ENCODE measurements at regions of chr17 and their contacts with region 1.

Region 1: GRCh38 chr17:57021226-57021940 is 43.5 kb downstream of the SCPEP1 start:
- DNase-seq: no peak
- H3K4me3 ChIP-seq: no peak overlapping the region
- H3K27me3 ChIP-seq: no peaks in the 10 kb centered on the region
- CTCF ChIP-seq: no peak

Region 2: DNA sequence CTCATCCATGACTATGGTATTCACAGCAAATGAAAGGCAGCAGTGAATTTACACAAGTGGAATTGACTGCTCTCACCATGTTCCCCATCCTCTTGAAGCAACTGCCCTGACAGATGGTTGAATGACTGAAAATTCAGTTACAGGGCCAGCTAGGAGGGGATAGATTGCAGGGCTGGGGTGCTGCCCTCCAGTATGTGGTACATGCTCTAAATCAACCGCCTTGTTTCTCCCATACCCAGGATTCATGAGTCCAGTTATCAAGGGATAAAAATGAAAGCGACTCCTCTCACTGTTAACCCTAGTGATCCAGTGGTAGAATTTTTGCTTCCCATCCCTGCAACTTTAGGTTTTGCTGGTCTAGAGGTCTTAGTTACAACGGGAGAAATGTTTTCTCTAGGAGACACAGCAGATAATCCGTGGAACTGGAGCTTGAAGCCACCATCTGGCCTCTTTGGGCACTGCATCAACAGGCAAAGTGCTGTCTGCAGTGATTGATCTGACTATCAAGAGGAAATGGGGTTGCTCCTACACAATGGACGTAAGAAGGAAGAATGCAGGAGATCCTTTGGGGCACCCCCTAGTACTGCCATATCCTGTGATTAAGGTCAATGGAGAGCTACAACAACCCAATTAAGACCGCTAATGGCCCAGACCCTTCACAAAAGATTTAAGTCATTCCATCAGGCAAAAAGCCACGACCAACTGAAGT is 11.5 kb before region 1 on chr17:
- CTCF ChIA-PET with region 1: interaction called, 11 read pairs
- POLR2A ChIA-PET with region 1: no interaction called
- DNase-seq: no peak
- H3K4me3 ChIP-seq: no peak overlapping the region
- H3K27me3 ChIP-seq: peaks cover 3% of the 10 kb centered on the region; the same call in 1 of the 2 replicates
- CTCF ChIP-seq: peak; percentile 76